Naive thymus-derived CD8-positive, alpha-beta T cell (primary cell): ENCODE measurements at regions of chr10 and their contacts with region 1.

Region 1: GRCh38 chr10:6580279-6581029 is 378 bp upstream of the PRKCQ start:
- DNase-seq: peak; percentile 69 to 96 (median 88)
- ATAC-seq: peak; percentile 69 to 76
- H3K4me3 Mint-ChIP-seq: peak overlapping the region; percentile 90 to 97 (median 94)
- H3K27ac Mint-ChIP-seq: peak overlapping the region; percentile 94 to 99 (median 97)
- H3K4me1 Mint-ChIP-seq: peaks cover 34 to 66% (median 60%) of the 10 kb centered on the region in 4 donors
- H3K27me3 Mint-ChIP-seq: peaks cover 0 to 5% (median 0%) of the 10 kb centered on the region in 5 donors

Region 2: DNA sequence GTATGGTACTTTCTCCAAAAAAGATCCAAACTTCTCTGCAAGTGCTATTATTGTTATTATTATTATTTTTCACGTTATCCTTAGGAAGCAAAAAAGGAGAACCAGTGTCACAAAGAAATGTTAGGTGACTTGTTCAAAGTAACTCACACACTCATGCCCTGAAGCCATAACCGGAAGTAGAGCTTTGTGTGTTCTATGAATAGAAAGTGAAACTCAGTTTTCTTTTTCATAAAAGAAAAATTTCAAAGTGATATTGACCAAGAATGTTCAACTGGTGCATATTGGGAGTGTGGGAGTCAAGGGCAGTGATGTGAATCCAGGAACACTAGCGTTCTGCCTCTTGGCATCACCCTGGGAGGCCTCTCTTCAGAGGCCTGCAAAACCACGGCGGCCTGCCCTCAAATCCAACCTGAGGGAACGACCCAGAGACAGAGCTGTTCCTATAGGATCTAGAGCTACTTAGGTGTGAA is 106.5 kb before region 1 on chr10:
- POLR2A ChIA-PET with region 1: interaction called, 14 read pairs
- DNase-seq: peak in 5 of 10 donors; percentile 33 to 70 (median 58)
- ATAC-seq: peak; percentile 76 to 78
- H3K4me3 Mint-ChIP-seq: peak overlapping the region; percentile 73 to 89 (median 88)
- H3K27ac Mint-ChIP-seq: peak overlapping the region; percentile 92 to 98 (median 98)
- H3K4me1 Mint-ChIP-seq: peaks cover 25 to 69% (median 61%) of the 10 kb centered on the region in 4 donors
- H3K27me3 Mint-ChIP-seq: no peaks in the 10 kb centered on the region

Region 3: GRCh38 chr10:6487920-6488319 is 92.5 kb before region 1 on chr10:
- POLR2A ChIA-PET with region 1: no interaction called
- DNase-seq: no peak
- ATAC-seq: no peak
- H3K4me3 Mint-ChIP-seq: no peak overlapping the region
- H3K27ac Mint-ChIP-seq: no peak overlapping the region
- H3K4me1 Mint-ChIP-seq: peaks cover 12 to 47% (median 34%) of the 10 kb centered on the region in 4 donors
- H3K27me3 Mint-ChIP-seq: no peaks in the 10 kb centered on the region

Region 4: GRCh38 chr10:6542999-6543430 is 37.4 kb before region 1 on chr10:
- POLR2A ChIA-PET with region 1: interaction called, 17 read pairs
- DNase-seq: peak in 9 of 10 donors; percentile 32 to 82 (median 65)
- ATAC-seq: peak; percentile 88 to 90
- H3K4me3 Mint-ChIP-seq: peak overlapping the region; percentile 83 to 98 (median 94)
- H3K27ac Mint-ChIP-seq: peak overlapping the region; percentile 95 to 100 (median 99)
- H3K4me1 Mint-ChIP-seq: peaks cover 42 to 84% (median 80%) of the 10 kb centered on the region in 4 donors
- H3K27me3 Mint-ChIP-seq: no peaks in the 10 kb centered on the region

Region 5: GRCh38 chr10:6563075-6563474 is 17.4 kb before region 1 on chr10:
- POLR2A ChIA-PET with region 1: interaction called, 15 read pairs
- DNase-seq: no peak
- ATAC-seq: peak; percentile 67 to 78
- H3K4me3 Mint-ChIP-seq: peak overlapping the region; percentile 55 to 86 (median 76)
- H3K27ac Mint-ChIP-seq: peak overlapping the region; percentile 76 to 95 (median 91)
- H3K4me1 Mint-ChIP-seq: peaks cover 46 to 96% (median 93%) of the 10 kb centered on the region in 4 donors
- H3K27me3 Mint-ChIP-seq: no peaks in the 10 kb centered on the region

Region 6: DNA sequence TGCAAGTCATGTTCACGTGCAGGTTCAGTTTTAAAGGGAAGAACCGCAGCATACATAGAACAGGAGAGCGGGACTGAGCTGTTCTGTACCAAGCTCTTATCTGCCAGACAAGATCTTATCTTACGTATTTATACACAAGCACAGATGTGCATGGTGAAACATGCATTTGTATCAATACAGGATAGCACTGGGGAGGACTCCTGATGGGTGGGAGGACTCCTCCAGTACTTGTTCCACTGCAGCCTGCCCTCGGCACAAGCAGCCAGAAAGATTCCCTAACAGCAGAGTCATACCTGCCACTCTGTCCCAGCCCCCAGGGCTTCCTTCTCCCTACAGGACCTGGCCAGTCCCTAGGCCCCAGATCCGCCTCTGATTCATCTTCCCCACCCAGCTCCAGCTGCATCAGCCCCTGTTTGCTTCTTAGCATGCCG is 12.8 kb after region 1 on chr10:
- POLR2A ChIA-PET with region 1: interaction called, 350 read pairs
- DNase-seq: peak in 3 of 10 donors; percentile 32 to 42 (median 40)
- ATAC-seq: peak; percentile 30 to 43
- H3K4me3 Mint-ChIP-seq: peak overlapping the region; percentile 49 to 90 (median 79)
- H3K27ac Mint-ChIP-seq: peak overlapping the region; percentile 96 to 99 (median 98)
- H3K4me1 Mint-ChIP-seq: peaks cover 41 to 94% (median 92%) of the 10 kb centered on the region in 4 donors
- H3K27me3 Mint-ChIP-seq: no peaks in the 10 kb centered on the region